ENCODE measurements at regions of chr10 and their contacts with region 1.

Region 1: GRCh38 chr10:25875556-25876165 is 58.4 kb upstream of the MYO3A start:
- DNase-seq: peak in 1 of 2 experiments; percentile 37
- H3K4me3 ChIP-seq: no peak overlapping the region
- H3K27ac ChIP-seq: no peak overlapping the region
- H3K4me1 ChIP-seq: no peaks in the 10 kb centered on the region
- H3K27me3 ChIP-seq: no peaks in the 10 kb centered on the region
- CTCF ChIP-seq: peak; percentile 84

Region 2: DNA sequence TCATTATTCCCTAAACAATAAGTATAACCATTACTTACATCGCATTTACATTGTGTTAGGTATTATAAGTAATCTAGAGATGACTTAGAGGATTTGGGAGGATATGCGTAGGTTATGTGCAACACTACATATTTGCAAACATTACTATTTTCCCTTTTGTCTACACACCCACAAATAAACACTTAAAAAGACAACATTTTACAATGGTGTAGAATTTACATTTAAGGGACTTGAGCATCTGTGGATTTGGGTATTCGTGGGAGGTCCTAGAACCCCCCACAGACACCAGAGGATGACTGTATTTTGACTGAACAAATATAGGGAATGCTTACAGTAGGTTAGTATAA is 161.8 kb before region 1 on chr10:
- CTCF ChIA-PET with region 1: no interaction called
- POLR2A ChIA-PET with region 1: no interaction called
- intact Hi-C with region 1: no loop called
- DNase-seq: no peak
- H3K4me3 ChIP-seq: no peak overlapping the region
- H3K27ac ChIP-seq: no peak overlapping the region
- H3K4me1 ChIP-seq: no peaks in the 10 kb centered on the region
- H3K27me3 ChIP-seq: no peaks in the 10 kb centered on the region; the same call in 1 of the 2 replicates
- CTCF ChIP-seq: no peak

Region 3: DNA sequence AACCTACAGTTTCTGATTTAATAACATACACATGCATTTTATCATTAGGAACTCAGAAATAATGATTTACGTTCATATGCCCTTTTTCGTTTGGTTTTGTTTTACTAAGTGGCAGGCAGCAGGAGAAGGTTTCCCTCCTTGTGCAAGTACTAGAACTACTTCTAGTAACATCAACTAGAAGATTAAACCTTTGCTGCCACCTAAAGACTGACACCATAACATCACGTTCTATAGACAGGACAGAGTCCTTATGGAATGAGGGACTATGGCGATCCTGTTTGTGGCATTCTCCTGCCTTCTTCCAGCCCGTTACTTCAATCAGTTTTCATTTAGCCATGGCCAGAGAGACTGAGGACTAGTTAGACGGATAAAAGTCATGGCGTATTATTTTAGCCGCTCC is 394.1 kb after region 1 on chr10:
- CTCF ChIA-PET with region 1: no interaction called
- POLR2A ChIA-PET with region 1: no interaction called
- intact Hi-C with region 1: loop called (anchors 5 kb)
- DNase-seq: no peak
- H3K4me3 ChIP-seq: no peak overlapping the region
- H3K27ac ChIP-seq: no peak overlapping the region
- H3K4me1 ChIP-seq: no peaks in the 10 kb centered on the region
- H3K27me3 ChIP-seq: peaks cover 31% of the 10 kb centered on the region; the same call in 1 of the 2 replicates
- CTCF ChIP-seq: no peak; the same call in 1 of the 2 replicates